Panc1 (cell line): ENCODE measurements at regions of chr17 and their contacts with region 1.

Region 1: DNA sequence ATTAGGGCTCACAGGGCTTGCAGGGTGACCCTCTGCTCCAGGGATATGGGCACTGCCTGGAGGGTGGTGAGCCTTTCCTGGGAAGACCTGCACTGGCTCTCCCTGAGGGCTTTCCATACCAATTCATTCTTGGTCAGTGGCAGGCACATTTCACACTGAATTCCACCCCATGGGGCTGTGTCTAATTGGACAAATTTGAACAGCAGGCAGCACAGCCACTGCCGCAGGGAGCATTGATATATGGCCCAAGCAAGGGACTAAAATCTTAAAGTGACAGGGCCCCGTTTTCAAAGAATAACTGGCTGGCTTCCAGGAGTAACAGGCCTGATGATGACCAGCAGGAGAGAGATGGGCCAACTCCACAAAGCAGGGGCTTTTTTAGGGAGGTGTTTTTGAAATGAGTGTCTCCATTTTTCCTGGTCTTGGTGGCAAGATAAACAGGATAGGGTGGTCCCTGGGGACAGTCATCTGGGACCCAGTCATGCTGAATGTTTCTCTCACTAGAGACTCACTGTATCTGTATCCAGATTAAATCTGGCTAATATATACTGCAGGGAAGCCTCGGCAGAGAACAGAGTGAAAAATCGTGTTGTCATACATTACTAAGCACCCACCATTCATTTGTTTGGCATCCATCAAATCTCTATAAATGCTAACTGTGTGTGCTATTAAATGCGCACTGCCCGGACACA is 74.1 kb upstream of the TBX2 start:
- DNase-seq: no peak
- ATAC-seq: peak; percentile 28; the same call in 1 of the 2 replicates
- H3K4me3 ChIP-seq: no peak overlapping the region
- H3K27ac ChIP-seq: peak overlapping the region; percentile 55
- H3K4me1 ChIP-seq: peaks cover 32% of the 10 kb centered on the region
- H3K27me3 ChIP-seq: no peaks in the 10 kb centered on the region
- CTCF ChIP-seq: no peak

Region 2: GRCh38 chr17:60769031-60769726 is 556.3 kb before region 1 on chr17:
- CTCF ChIA-PET with region 1: no interaction called
- POLR2A ChIA-PET with region 1: interaction called, 11 read pairs
- in situ Hi-C with region 1: no loop called
- intact Hi-C with region 1: no loop called
- DNase-seq: no peak
- ATAC-seq: no peak
- H3K4me3 ChIP-seq: no peak overlapping the region
- H3K27ac ChIP-seq: no peak overlapping the region
- H3K4me1 ChIP-seq: no peaks in the 10 kb centered on the region
- H3K27me3 ChIP-seq: no peaks in the 10 kb centered on the region
- CTCF ChIP-seq: no peak